ENCODE measurements at regions of chr7 and their contacts with region 1.

Region 1: GRCh38 chr7:6153646-6154541 is 118.5 kb downstream of the CYTH3 start:
- DNase-seq: no peak
- ATAC-seq: peak in 1 of 4 experiments; percentile 16
- H3K4me3 ChIP-seq: no peak overlapping the region
- H3K4me3 Mint-ChIP-seq: no peak overlapping the region
- H3K27ac ChIP-seq: no peak overlapping the region
- H3K27ac Mint-ChIP-seq: no peak overlapping the region
- H3K4me1 ChIP-seq: no peaks in the 10 kb centered on the region
- H3K4me1 Mint-ChIP-seq: no peaks in the 10 kb centered on the region
- H3K27me3 ChIP-seq: no peaks in the 10 kb centered on the region
- H3K27me3 Mint-ChIP-seq: no peaks in the 10 kb centered on the region

Region 2: DNA sequence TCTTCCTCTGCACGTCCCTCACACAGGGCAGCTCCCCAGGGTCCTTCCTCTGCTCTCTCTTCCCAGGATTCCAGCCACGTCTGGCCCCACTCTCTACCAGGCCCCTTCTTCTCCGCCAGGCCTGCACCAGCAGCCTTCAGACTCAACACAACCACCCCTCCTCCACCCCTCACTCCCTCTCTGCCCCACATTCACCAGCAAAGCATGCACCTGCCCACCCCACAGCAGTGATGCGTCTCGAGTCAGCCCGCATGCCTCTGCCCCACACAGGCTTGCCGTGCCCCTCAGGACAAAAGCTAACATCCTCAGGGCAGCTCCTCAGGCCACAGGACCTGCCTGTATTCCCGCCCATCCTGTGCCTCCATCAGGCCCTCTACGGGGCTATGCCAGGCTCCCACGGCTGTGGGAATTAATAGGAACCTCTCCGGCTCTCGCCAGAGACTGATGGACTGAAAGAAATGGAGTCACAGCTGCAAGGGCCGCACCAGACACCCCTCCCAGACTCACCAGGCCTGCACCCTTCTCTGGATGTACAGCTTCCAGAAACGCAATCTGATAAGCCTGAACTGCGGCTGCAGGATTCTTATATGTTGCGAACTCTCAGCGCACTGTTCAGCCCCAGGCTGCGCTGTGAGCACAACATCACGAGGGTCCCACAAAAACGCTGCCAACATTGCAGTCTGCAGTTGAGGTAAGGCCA is 18.5 kb after region 1 on chr7:
- CTCF ChIA-PET with region 1: no interaction called
- POLR2A ChIA-PET with region 1: no interaction called
- DNase-seq: no peak
- ATAC-seq: no peak
- H3K4me3 ChIP-seq: no peak overlapping the region
- H3K4me3 Mint-ChIP-seq: no peak overlapping the region
- H3K27ac ChIP-seq: no peak overlapping the region
- H3K27ac Mint-ChIP-seq: no peak overlapping the region
- H3K4me1 ChIP-seq: no peaks in the 10 kb centered on the region
- H3K4me1 Mint-ChIP-seq: no peaks in the 10 kb centered on the region
- H3K27me3 ChIP-seq: no peaks in the 10 kb centered on the region
- H3K27me3 Mint-ChIP-seq: no peaks in the 10 kb centered on the region

Region 3: DNA sequence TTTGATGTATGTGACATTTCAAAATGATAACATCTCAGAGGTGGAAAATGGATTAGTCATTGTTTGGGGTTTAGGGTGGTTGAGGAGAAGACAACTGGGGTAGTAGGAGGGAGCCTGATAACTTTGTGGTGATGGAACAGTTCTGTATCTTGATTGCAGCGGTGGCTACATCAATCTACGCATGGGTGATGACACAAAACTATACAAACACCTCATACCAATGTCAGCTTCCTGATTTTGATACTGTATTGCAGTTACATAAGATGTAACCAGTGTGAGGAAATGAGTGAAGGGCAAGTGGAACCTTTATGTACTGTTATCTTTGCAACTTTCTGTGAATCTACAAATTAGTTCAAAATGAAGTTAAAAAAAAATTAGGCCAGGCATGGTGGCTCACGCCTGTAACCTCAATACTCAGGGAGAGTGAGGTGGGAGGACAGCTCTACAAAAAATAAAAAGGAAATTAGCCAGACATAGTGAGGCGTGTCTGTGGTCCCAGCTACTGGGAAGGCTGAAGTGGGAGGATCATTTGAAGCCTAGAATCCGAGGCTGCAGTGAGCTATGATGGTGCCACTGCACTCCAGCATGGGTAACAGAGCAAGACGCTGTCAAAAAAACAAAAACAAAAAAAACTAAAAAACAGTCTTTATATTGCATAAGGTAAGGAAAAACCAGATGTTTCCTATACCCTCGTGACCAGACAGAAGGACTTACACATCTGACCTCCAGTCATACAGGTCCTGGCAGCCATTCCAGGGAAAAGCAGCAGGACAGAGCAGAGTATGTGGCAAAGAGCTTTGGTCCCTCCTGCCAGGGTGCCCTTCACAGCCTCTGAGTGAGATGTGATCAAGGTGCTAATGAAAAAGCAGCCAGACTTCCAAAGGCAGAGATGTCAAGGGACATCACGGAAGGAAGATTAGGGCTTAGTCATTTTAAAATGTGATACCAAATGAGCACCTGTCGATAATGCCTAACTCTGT is 67.7 kb after region 1 on chr7:
- CTCF ChIA-PET with region 1: no interaction called
- POLR2A ChIA-PET with region 1: interaction called in 1 of 2 experiments, 13 read pairs
- DNase-seq: peak in 24 of 35 experiments; percentile 4 to 62 (median 21)
- ATAC-seq: peak; percentile 90 to 92 (median 90)
- H3K4me3 ChIP-seq: no peak overlapping the region
- H3K4me3 Mint-ChIP-seq: peak overlapping the region in 2 of 3 donors; percentile 30 to 67
- H3K27ac ChIP-seq: peak overlapping the region; percentile 54
- H3K27ac Mint-ChIP-seq: peak overlapping the region; percentile 92 to 99
- H3K4me1 ChIP-seq: peaks cover 0 to 7% of the 10 kb centered on the region in 2 experiments
- H3K4me1 Mint-ChIP-seq: peaks cover 15 to 30% (median 23%) of the 10 kb centered on the region in 3 donors
- H3K27me3 ChIP-seq: no peaks in the 10 kb centered on the region
- H3K27me3 Mint-ChIP-seq: no peaks in the 10 kb centered on the region